ENCODE measurements at regions of chr11 and their contacts with region 1.

Region 1: GRCh38 chr11:27291302-27291889 is 71.6 kb downstream of the CCDC34 start:
- DNase-seq: peak; percentile 65 to 87 (median 66)
- ATAC-seq: peak; percentile 68
- H3K4me3 ChIP-seq: no peak overlapping the region
- H3K4me1 ChIP-seq: peaks cover 28% of the 10 kb centered on the region
- CTCF ChIP-seq: no peak

Region 2: DNA sequence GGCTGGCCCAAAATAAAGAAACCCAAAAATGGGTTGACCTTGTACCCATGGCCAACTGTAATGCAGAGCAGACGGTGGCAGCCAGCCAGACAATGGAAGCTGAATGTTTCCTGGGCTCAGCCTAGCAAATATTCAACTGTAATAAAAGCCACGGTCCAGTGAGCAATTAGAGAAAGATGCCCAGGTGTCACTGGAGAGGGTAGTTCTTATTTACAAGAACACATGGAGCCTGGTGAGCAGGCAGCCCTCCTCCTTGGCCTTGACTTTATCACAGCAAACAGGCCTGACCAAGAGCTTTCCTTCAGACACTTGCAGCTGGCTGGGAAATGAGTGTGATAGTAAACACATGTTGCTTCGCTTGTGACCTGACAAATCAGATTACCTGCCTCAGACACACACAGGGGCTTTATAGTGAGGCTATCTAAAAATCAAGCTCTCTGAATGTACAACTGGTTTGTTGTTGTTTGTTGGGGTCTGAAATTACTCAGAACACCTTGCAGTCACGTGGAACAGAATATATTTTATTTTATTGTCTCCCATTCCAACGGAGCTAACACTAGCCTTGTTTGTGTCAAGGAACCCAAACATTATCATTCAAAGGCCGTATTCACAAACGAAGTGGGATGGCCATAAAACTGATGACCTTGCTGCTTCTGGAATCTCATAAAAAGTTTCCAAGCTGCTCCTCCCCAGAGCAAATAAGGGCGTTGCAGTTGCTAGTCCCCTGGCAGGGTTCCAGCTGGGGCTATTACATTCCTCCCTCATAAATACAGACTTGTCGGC is 89.8 kb before region 1 on chr11:
- intact Hi-C with region 1: loop called in 1 of 2 experiments (anchors 5 kb)
- DNase-seq: peak; percentile 83 to 99 (median 85)
- ATAC-seq: peak; percentile 85
- H3K4me3 ChIP-seq: no peak overlapping the region
- H3K4me1 ChIP-seq: peaks cover 51% of the 10 kb centered on the region
- CTCF ChIP-seq: no peak

Region 3: GRCh38 chr11:27234043-27234668 is 57.2 kb before region 1 on chr11:
- intact Hi-C with region 1: loop called in 1 of 2 experiments (anchors 2 kb)
- DNase-seq: peak; percentile 34 to 58 (median 57)
- ATAC-seq: peak; percentile 90
- H3K4me3 ChIP-seq: no peak overlapping the region
- H3K4me1 ChIP-seq: peaks cover 38% of the 10 kb centered on the region
- CTCF ChIP-seq: no peak

Region 4: GRCh38 chr11:27472398-27473016 is 181.1 kb after region 1 on chr11 and contains the start of gene LGR4:
- intact Hi-C with region 1: no loop called
- DNase-seq: peak; percentile 94 to 95 (median 95)
- ATAC-seq: peak; percentile 86
- H3K4me3 ChIP-seq: peak within 1 kb of the TSS; percentile 94
- H3K4me1 ChIP-seq: peaks cover 7% of the 10 kb centered on the region
- CTCF ChIP-seq: no peak
- total RNA-seq, gene LGR4: 81.9 to 185 (median 104) TPM